ENCODE measurements at regions of chr16 and their contacts with region 1.

Region 1: DNA sequence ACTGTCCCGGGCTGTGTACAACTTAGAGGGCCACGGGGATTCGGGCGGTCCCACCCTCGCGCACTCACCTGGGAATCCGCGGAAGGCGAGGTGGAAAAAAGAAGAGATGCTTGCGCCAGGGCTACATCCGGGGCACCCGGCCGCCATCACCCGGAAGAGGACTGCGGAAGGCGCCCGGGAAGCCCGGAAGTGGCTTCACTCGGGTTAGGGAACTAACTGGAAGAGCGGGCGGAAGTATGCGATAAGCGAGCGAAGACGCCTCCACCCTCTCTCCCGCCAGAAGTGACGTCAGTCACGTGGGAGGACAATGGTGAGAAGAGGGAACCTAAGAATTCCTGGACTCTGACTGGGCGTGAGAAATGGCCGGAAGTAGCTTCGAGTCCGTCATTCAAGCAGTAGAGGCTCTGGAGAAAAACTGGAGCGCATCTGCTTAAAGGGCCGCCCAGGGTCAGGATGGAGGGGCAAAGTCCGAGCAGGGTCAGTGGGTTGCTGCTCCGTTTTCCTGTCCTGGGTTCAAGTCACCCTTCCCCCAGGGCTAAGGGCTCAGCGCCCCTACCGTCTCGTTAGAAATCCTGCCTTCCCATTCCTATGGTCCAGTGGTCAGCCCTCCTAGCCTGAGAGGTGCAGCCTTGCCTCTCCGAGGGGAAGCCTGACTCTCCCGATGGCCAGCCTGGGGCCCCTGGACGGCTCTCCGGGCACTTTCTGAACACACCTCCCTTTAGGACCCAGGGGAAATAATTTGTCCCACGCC is at the start of gene CD2BP2:
- DNase-seq: peak; percentile 97
- ATAC-seq: peak; percentile 93
- total RNA-seq, gene CD2BP2: 35.0 TPM

Region 2: GRCh38 chr16:30104494-30104968 is 250.8 kb before region 1 on chr16:
- intact Hi-C with region 1: no loop called
- DNase-seq: no peak
- ATAC-seq: no peak

Region 3: DNA sequence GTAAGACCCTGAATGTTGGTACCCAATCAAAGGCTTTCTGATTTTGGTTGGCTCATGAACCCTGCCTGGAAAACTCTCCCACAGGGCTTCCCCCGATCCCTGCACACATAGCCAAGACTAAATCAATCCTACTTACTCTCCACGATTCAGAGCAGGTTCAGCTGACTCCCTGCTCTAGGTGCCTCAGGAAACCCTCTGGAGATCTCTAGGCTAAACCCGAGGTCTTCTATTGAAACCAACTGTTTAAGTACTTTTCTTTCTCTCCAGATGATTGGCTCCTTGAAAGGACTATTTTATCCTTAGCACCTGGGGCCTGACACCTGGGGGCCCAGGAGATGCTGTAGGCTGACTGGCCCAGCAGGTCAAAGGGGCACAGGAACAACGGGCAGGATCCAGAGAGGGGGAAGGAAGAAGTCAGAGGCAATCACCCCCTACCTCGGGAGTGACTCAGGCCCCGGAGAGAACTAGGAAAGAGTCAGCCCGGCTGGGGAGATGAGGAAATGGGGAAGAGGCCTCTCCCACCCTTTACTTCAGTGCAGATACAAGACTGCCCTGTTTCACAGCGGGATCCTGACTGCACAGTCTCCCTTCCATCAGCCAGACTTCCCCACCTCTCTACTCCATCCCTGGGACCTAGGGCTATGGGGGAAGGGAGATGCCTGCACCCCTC is 12.9 kb after region 1 on chr16:
- intact Hi-C with region 1: loop called (anchors 1 kb)
- DNase-seq: no peak
- ATAC-seq: no peak

Measured in Right ventricle myocardium inferior (tissue), 1 donor.